Sigmoid colon (tissue), 7 donors: ENCODE measurements at regions of chr9 and their contacts with region 1.

Region 1: GRCh38 chr9:117734523-117735314 is 30.5 kb downstream of the TLR4 start:
- DNase-seq: no peak
- H3K4me3 ChIP-seq: no peak overlapping the region
- H3K27ac ChIP-seq: no peak overlapping the region
- H3K4me1 ChIP-seq: no peaks in the 10 kb centered on the region
- H3K27me3 ChIP-seq: no peaks in the 10 kb centered on the region
- CTCF ChIP-seq: no peak
- EP300 ChIP-seq: no peak
- POLR2A ChIP-seq: no peak

Region 2: GRCh38 chr9:117662651-117663050 is 72.1 kb before region 1 on chr9:
- intact Hi-C with region 1: no loop called
- DNase-seq: no peak
- H3K4me3 ChIP-seq: no peak overlapping the region
- H3K27ac ChIP-seq: no peak overlapping the region
- H3K4me1 ChIP-seq: no peaks in the 10 kb centered on the region
- H3K27me3 ChIP-seq: no peaks in the 10 kb centered on the region
- CTCF ChIP-seq: no peak
- EP300 ChIP-seq: no peak
- POLR2A ChIP-seq: no peak

Region 3: GRCh38 chr9:117678871-117679270 is 55.8 kb before region 1 on chr9:
- intact Hi-C with region 1: loop called (anchors 5 kb)
- DNase-seq: no peak
- H3K4me3 ChIP-seq: no peak overlapping the region
- H3K27ac ChIP-seq: peak overlapping the region in 1 of 4 donors; percentile 28
- H3K4me1 ChIP-seq: no peaks in the 10 kb centered on the region
- H3K27me3 ChIP-seq: no peaks in the 10 kb centered on the region
- CTCF ChIP-seq: no peak
- EP300 ChIP-seq: no peak
- POLR2A ChIP-seq: no peak